CD8-positive, alpha-beta T cell (primary cell): ENCODE measurements at regions of chr22 and their contacts with region 1.

Region 1: DNA sequence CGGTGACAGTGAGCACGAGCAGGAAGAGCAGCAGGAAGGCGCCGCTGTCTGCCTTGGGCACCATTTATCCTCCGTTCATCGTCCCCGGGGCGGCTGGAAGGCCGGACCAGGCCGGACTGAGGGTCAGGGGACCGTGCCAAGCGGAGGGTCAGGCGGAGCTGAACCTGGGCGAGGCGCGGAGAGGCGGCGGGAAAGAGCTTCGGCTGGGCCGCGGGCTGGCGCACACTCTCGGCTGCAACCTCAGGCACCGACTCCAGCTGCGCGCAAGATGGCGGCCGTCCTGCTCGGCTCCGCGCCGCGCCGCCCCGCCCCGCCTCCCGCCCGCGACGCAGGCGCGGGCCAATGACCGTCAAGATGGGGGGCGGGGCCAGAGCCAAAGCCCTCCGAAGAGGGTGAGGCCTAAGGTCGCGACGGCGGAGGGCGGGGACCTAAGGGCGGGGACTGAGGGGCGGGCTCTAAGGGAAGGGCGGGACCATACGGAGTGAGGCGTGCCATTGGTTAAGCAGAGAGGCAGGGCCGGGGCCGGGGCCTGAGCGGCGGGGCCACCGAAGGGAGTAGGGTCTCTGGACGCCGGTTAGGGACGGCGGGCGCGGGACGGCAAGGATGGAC is at the start of gene DGCR2:
- DNase-seq: peak; percentile 93 to 98 (median 97)
- ATAC-seq: peak; percentile 98
- H3K4me3 ChIP-seq: peak within 1 kb of the TSS; percentile 73 to 78
- H3K4me3 Mint-ChIP-seq: peak within 1 kb of the TSS; percentile 89
- H3K27ac ChIP-seq: peak within 1 kb of the TSS; percentile 75 to 88
- H3K27ac Mint-ChIP-seq: peak within 1 kb of the TSS; percentile 90
- H3K4me1 ChIP-seq: peaks cover 49% of the 10 kb centered on the region
- H3K4me1 Mint-ChIP-seq: peaks cover 47% of the 10 kb centered on the region
- H3K27me3 ChIP-seq: no peaks in the 10 kb centered on the region
- H3K27me3 Mint-ChIP-seq: no peaks in the 10 kb centered on the region
- CTCF ChIP-seq: no peak
- total RNA-seq, gene DGCR2: 29.6 to 32.4 TPM

Region 2: DNA sequence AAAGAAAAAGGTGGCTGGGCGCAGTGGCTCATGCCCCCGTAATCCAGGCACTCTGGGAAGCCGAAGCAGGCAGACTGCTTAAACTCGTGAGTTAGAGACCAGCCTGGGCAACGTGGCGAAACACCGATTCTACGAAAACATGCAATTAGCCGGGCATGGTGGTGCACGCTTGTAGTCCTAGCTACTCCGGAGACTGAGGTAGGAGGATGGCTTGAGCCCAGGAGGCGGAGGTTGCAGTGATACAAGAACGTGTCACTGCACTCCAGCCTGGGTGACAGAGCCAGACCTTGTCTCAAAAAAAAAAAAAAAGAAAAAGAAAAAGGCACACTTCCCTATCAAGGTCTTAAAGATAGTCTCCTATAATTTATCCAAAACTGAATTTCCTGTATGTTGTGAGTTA is 39.5 kb before region 1 on chr22:
- CTCF ChIA-PET with region 1: no interaction called
- POLR2A ChIA-PET with region 1: no interaction called
- intact Hi-C with region 1: no loop called
- DNase-seq: no peak
- ATAC-seq: no peak
- H3K4me3 ChIP-seq: no peak overlapping the region
- H3K4me3 Mint-ChIP-seq: no peak overlapping the region
- H3K27ac ChIP-seq: no peak overlapping the region
- H3K27ac Mint-ChIP-seq: no peak overlapping the region
- H3K4me1 ChIP-seq: no peaks in the 10 kb centered on the region
- H3K4me1 Mint-ChIP-seq: peaks cover 20% of the 10 kb centered on the region
- H3K27me3 ChIP-seq: no peaks in the 10 kb centered on the region
- H3K27me3 Mint-ChIP-seq: no peaks in the 10 kb centered on the region
- CTCF ChIP-seq: no peak

Region 3: GRCh38 chr22:19178656-19179496 is 56.6 kb after region 1 on chr22 and contains the start of gene SLC25A1:
- CTCF ChIA-PET with region 1: no interaction called
- POLR2A ChIA-PET with region 1: interaction called, 4 read pairs
- intact Hi-C with region 1: loop called (anchors 1 to 2 kb)
- DNase-seq: peak in 8 of 9 experiments; percentile 54 to 87 (median 78)
- ATAC-seq: peak; percentile 67
- H3K4me3 ChIP-seq: peak within 1 kb of the TSS; percentile 68 to 74
- H3K4me3 Mint-ChIP-seq: peak within 1 kb of the TSS; percentile 84
- H3K27ac ChIP-seq: peak within 1 kb of the TSS; percentile 42 to 65
- H3K27ac Mint-ChIP-seq: peak within 1 kb of the TSS; percentile 84
- H3K4me1 ChIP-seq: peaks cover 24% of the 10 kb centered on the region
- H3K4me1 Mint-ChIP-seq: peaks cover 22% of the 10 kb centered on the region
- H3K27me3 ChIP-seq: no peaks in the 10 kb centered on the region
- H3K27me3 Mint-ChIP-seq: no peaks in the 10 kb centered on the region
- CTCF ChIP-seq: no peak
- total RNA-seq, gene SLC25A1: 14.5 to 15.9 TPM

Region 4: DNA sequence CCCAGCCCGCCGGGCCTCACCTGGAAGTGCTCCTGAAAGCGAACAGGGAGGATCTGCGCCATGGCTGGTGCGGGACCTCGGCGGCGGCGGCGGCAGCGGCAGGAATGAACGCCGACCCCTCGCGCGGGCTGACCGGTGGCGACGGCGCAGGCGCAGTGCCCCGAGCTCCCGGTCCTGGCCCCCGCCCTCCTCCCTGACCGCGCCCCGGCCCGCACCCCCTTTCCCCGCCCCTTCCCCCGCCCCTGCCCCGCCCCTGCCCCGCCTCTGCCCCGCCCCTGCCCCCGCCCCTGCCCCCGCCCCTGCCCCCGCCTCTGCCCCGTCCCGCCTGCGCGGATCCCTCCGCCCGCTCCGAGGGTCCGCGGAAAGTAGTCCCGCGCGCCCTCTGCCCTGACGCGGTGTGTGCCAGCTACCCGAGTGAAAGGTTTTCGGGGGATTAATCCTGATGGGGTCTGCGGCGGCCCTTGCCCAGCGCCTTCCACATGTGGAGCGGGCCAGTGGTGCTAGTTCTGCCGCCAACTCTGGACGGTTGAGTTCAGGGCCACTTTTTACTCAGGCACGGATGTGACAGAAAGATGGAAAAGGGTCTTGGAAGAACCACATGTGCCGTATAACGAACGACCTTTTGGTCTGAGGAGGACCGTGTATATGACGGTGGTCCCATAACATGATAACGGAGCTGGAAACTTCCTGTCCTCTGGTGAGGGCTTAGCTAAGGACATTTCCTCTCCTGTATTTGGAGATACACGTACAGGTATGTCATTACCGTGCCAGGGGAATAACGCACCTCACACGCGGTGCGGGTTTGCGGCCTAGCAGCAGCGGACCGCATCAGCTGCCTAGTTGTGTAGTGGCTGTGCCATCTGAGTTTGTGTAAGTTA is 169.6 kb after region 1 on chr22 and contains the start of gene CLTCL1:
- CTCF ChIA-PET with region 1: no interaction called
- POLR2A ChIA-PET with region 1: no interaction called
- intact Hi-C with region 1: loop called (anchors 1 kb)
- DNase-seq: peak; percentile 40 to 83 (median 67)
- ATAC-seq: peak; percentile 81
- H3K4me3 ChIP-seq: peak within 1 kb of the TSS; percentile 82 to 92
- H3K4me3 Mint-ChIP-seq: peak within 1 kb of the TSS; percentile 93
- H3K27ac ChIP-seq: peak within 1 kb of the TSS; percentile 38 to 55
- H3K27ac Mint-ChIP-seq: peak within 1 kb of the TSS; percentile 23
- H3K4me1 ChIP-seq: peaks cover 18% of the 10 kb centered on the region
- H3K4me1 Mint-ChIP-seq: peaks cover 24% of the 10 kb centered on the region
- H3K27me3 ChIP-seq: no peaks in the 10 kb centered on the region
- H3K27me3 Mint-ChIP-seq: peaks cover 21% of the 10 kb centered on the region
- CTCF ChIP-seq: no peak
- total RNA-seq, gene CLTCL1: 0.43 to 0.69 TPM

Region 5: GRCh38 chr22:19447388-19448075 is 325.3 kb after region 1 on chr22 and contains the start of gene C22orf39:
- CTCF ChIA-PET with region 1: no interaction called
- POLR2A ChIA-PET with region 1: no interaction called
- intact Hi-C with region 1: loop called in 1 of 2 experiments (anchors 1 kb)
- DNase-seq: peak; percentile 72 to 95 (median 87)
- ATAC-seq: peak; percentile 90
- H3K4me3 ChIP-seq: peak within 1 kb of the TSS; percentile 78 to 93
- H3K4me3 Mint-ChIP-seq: peak within 1 kb of the TSS; percentile 92
- H3K27ac ChIP-seq: peak within 1 kb of the TSS; percentile 85 to 92
- H3K27ac Mint-ChIP-seq: peak within 1 kb of the TSS; percentile 93
- H3K4me1 ChIP-seq: peaks cover 27% of the 10 kb centered on the region
- H3K4me1 Mint-ChIP-seq: peaks cover 42% of the 10 kb centered on the region
- H3K27me3 ChIP-seq: no peaks in the 10 kb centered on the region
- H3K27me3 Mint-ChIP-seq: no peaks in the 10 kb centered on the region
- CTCF ChIP-seq: no peak
- total RNA-seq, gene C22orf39: 31.0 to 34.1 TPM

Region 6: DNA sequence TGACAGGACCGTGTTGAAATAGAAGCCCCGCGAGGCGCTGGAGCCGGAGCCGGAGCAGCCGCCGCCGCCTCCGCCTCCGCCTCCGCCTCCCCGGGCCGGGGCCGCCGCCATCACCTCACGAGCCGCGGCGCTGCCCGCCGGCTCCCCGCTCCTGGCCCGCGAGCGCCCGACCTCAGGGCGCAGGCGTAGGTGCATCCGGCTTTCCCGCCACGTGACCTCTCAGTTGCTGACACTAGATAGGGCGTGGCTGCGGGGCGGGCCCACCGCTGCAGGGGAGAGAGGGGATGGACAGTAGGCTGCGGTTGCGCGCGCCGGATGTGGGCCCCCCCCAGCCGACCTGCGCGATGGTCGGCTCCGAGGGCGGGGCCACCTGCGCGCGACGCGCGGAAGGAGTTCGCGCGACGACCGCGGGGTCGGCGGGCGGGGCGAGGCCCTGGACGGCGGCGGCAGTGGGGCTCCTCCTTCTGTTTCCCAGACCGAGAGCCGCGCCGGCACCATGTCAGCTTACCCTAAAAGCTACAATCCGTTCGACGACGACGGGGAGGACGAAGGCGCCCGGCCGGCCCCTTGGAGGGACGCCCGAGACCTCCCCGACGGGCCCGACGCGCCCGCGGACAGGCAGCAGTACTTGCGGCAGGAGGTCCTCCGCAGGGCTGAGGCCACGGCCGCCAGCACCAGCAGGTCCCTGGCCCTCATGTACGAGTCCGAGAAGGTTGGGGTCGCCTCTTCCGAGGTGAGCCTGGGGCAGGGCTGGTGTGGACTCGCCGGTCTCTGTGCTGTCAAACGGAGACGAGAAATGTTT is 1736.6 kb after region 1 on chr22 and contains the starts of genes PI4KA and SNAP29:
- CTCF ChIA-PET with region 1: no interaction called
- POLR2A ChIA-PET with region 1: no interaction called
- intact Hi-C with region 1: loop called in 1 of 2 experiments (anchors 5 kb)
- DNase-seq: peak; percentile 94 to 99 (median 98)
- ATAC-seq: peak; percentile 88
- H3K4me3 ChIP-seq: peak within 1 kb of the TSS; percentile 63 to 78
- H3K4me3 Mint-ChIP-seq: peak within 1 kb of the TSS; percentile 91
- H3K27ac ChIP-seq: peak within 1 kb of the TSS; percentile 72 to 83
- H3K27ac Mint-ChIP-seq: peak within 1 kb of the TSS; percentile 88
- H3K4me1 ChIP-seq: peaks cover 24% of the 10 kb centered on the region
- H3K4me1 Mint-ChIP-seq: peaks cover 65% of the 10 kb centered on the region
- H3K27me3 ChIP-seq: no peaks in the 10 kb centered on the region
- H3K27me3 Mint-ChIP-seq: no peaks in the 10 kb centered on the region
- CTCF ChIP-seq: no peak
- total RNA-seq, gene PI4KA: 154 to 155 TPM
- total RNA-seq, gene SNAP29: 16.5 to 17.1 TPM